ENCODE measurements at regions of chr11 and their contacts with region 1.

Region 1: DNA sequence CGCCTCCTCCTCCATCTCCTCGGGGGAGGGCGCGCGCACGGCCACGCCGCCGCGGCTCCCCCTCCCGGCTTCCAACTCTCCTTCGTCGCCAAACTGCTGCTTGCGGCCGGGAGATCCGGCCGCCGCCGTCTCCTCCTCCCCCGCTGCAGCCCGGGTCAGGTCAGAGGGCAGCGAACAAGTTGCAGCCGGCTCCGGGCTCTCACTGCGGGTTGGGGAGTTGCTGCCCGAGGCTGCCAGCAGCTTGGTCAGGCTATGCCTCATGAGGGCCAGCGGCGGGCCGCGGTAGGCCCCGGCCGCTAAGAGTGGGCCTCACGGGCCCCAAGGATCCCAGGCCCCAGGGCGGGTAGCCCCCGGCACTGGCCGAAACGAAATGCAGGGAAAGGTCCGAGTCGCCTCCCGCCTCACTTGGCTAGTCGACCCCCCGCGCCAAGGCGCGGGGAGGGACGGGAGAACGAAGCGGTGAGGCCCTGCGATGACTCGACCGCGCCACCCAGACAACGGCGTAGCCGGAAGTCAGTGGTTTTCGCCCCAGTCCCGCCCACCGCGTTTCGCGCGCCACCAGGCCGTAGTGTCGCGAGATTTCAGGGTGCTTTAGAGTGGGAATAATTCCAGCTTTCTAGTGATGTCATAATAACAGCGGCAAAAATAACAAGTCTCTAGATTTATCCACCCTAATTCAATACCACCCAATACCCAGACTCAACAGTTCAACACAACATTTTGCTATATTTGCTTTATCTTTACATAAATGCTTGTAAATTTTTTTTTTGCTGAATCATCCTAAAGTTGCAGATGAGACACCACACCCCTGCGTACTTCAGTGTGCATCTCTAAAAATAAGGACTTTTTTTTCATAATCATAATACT is at the start of gene CREBZF:
- DNase-seq: peak; percentile 95
- ATAC-seq: peak; percentile 84
- H3K4me3 ChIP-seq: peak within 1 kb of the TSS; percentile 78 to 95 (median 89)
- H3K4me3 Mint-ChIP-seq: peak within 1 kb of the TSS; percentile 94
- H3K27ac ChIP-seq: peak within 1 kb of the TSS; percentile 96 to 97
- H3K27ac Mint-ChIP-seq: peak within 1 kb of the TSS; percentile 95
- H3K4me1 ChIP-seq: peaks cover 16 to 21% of the 10 kb centered on the region in 2 donors
- H3K4me1 Mint-ChIP-seq: peaks cover 45% of the 10 kb centered on the region
- H3K27me3 ChIP-seq: no peaks in the 10 kb centered on the region
- H3K27me3 Mint-ChIP-seq: no peaks in the 10 kb centered on the region
- CTCF ChIP-seq: no peak
- total RNA-seq, gene CREBZF: 109 and 110 TPM in 2 replicates

Region 2: GRCh38 chr11:85316967-85317366 is 347.9 kb before region 1 on chr11:
- CTCF ChIA-PET with region 1: no interaction called
- POLR2A ChIA-PET with region 1: no interaction called
- intact Hi-C with region 1: loop called (anchors 10 kb)
- DNase-seq: peak; percentile 84
- ATAC-seq: peak; percentile 90
- H3K4me3 ChIP-seq: peak overlapping the region in 2 of 5 experiments; percentile 5 to 29
- H3K4me3 Mint-ChIP-seq: peak overlapping the region; percentile 52
- H3K27ac ChIP-seq: peak overlapping the region; percentile 69 to 74
- H3K27ac Mint-ChIP-seq: peak overlapping the region; percentile 80
- H3K4me1 ChIP-seq: peaks cover 39 to 41% of the 10 kb centered on the region in 2 donors
- H3K4me1 Mint-ChIP-seq: peaks cover 54% of the 10 kb centered on the region
- H3K27me3 ChIP-seq: no peaks in the 10 kb centered on the region
- H3K27me3 Mint-ChIP-seq: no peaks in the 10 kb centered on the region
- CTCF ChIP-seq: no peak

Region 3: DNA sequence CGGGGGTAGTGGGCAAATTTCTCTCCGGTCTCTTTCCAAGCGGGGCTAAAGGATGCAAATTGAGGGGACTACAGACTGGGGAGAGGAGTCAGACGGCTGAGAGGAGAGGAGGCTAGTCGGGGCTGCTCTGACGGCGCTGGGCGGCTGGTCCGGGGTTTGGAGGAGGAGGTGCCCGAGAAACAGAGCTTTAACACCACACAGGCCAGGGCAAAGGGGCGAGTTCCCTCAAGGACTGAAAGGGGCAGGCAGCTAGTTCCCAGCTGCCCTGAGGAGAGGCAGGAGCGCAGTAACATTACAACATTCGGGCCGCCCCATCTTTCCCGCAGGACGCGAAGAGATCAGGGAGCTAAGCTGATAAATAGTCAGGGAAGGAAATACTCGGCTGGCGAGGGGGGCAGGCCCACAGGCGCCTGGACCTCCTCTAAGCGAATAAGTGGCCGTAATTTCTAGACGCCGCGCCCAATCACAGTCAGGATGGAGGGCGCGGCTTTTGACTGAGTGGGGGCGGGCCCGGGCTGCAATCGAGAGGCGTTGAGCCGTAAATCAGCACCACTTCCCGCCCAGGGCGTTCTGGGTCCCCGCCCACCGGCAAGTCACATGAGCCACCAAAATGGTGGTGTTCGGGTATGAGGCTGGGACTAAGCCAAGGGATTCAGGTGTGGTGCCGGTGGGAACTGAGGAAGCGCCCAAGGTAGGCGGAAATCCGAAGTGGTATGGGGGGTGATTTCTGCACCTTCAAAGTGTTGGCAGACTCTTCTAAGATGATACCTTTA is 36.7 kb before region 1 on chr11 and contains the start of gene TMEM126B:
- CTCF ChIA-PET with region 1: interaction called, 15 read pairs
- POLR2A ChIA-PET with region 1: interaction called, 16 read pairs
- intact Hi-C with region 1: loop called (anchors 1 kb)
- DNase-seq: peak; percentile 95
- ATAC-seq: peak; percentile 98
- H3K4me3 ChIP-seq: peak within 1 kb of the TSS; percentile 75 to 99 (median 85)
- H3K4me3 Mint-ChIP-seq: peak within 1 kb of the TSS; percentile 99
- H3K27ac ChIP-seq: peak within 1 kb of the TSS; percentile 65 to 87
- H3K27ac Mint-ChIP-seq: peak within 1 kb of the TSS; percentile 96
- H3K4me1 ChIP-seq: peaks cover 14 to 19% of the 10 kb centered on the region in 2 donors
- H3K4me1 Mint-ChIP-seq: peaks cover 28% of the 10 kb centered on the region
- H3K27me3 ChIP-seq: no peaks in the 10 kb centered on the region
- H3K27me3 Mint-ChIP-seq: peaks cover 5% of the 10 kb centered on the region
- CTCF ChIP-seq: no peak
- total RNA-seq, gene TMEM126B: 37.2 and 38.5 TPM in 2 replicates

Region 4: DNA sequence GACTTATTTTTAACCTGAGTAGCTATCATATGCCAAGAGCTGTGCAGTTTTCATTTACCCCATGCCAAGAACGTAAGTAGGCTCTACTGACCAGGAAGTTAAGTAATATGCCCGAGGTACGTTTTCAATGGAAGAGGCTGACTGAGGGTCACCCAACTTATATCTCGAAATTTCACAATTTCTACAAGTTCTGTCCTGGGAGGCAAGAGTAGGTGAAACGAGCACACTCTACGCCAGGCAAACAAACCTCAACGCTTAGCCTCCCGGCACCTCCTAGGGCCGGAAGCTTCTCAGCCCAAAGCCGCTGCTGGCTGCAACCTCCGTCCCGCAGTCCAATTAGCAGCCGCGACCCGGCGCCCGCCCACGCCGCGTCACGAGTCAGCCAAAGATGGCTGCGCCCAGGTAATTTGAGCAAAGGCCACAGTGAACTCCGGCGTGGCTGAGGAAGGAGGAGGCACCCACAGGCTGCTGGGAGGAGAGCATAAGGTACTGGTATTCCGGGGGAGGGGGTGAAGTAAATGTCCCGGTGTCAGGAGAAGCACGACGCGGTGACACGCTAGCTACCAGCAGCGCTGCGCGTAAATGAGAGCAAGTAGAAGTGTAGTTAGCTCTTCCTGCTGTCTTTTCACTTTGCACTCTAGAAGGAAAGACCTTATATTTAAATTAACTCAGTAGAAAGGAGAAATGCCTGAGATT is 17.1 kb before region 1 on chr11 and contains the start of gene TMEM126A:
- CTCF ChIA-PET with region 1: interaction called, 7 read pairs
- POLR2A ChIA-PET with region 1: interaction called, 8 read pairs
- intact Hi-C with region 1: loop called (anchors 1 kb)
- DNase-seq: peak; percentile 91
- ATAC-seq: peak; percentile 99
- H3K4me3 ChIP-seq: peak within 1 kb of the TSS; percentile 79 to 87 (median 85)
- H3K4me3 Mint-ChIP-seq: peak within 1 kb of the TSS; percentile 89
- H3K27ac ChIP-seq: peak within 1 kb of the TSS; percentile 71 to 91
- H3K27ac Mint-ChIP-seq: peak within 1 kb of the TSS; percentile 93
- H3K4me1 ChIP-seq: peaks cover 12 to 13% of the 10 kb centered on the region in 2 donors
- H3K4me1 Mint-ChIP-seq: peaks cover 18% of the 10 kb centered on the region
- H3K27me3 ChIP-seq: peaks cover 0 to 12% (median 4%) of the 10 kb centered on the region in 4 experiments
- H3K27me3 Mint-ChIP-seq: peaks cover 19% of the 10 kb centered on the region
- CTCF ChIP-seq: no peak
- total RNA-seq, gene TMEM126A: 13.0 and 15.8 TPM in 2 replicates

Region 5: DNA sequence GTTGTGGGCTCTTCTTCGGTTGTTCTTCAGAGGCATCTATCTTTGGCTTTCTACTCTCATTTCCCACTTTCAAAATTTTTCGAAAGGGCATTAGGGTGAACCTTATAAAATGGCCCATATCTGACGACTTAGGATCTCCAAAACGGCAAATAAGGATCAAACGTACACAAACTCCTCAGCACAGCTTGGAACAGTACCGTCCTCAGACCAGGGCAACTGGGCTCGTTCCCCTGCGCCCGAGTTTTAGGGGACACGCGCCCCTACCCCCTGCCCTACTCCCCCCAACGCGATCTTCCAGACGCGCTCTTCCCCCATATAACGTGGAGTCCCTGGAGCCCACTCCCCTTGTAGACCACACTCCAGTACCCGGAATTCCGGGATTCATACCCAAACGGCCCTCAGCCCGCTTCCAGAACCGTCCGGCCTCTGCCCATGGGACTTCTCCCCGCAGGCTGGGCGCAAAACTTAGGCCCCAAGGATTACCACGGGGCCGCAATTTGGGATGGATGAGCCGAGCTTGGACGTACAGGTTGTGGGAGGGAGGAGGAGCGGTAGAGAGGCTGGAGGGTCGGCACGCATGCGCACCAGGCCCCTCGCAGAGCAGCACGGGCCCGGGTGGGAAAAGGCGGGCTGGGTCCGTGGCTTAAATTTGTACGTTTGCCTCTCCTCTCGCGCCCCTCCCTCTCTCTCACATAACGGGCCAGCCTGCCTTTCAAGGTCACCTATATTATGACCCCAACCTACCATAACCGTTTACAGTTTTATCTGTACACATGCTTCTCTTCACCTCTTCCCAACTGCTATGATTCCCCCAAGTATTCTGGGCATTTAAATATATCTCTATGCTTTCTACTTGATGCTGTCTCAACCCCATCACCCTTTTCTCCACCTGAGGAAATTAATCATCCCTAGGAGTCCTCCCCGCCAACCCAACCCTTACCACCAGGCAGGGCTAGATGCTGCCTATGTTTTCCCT is 17.8 kb after region 1 on chr11:
- CTCF ChIA-PET with region 1: interaction called, 3 read pairs
- POLR2A ChIA-PET with region 1: no interaction called
- intact Hi-C with region 1: loop called (anchors 1 kb)
- DNase-seq: peak; percentile 70
- ATAC-seq: peak; percentile 95
- H3K4me3 ChIP-seq: peak overlapping the region; percentile 62 to 96 (median 77)
- H3K4me3 Mint-ChIP-seq: peak overlapping the region; percentile 87
- H3K27ac ChIP-seq: peak overlapping the region; percentile 31 to 72
- H3K27ac Mint-ChIP-seq: peak overlapping the region; percentile 85
- H3K4me1 ChIP-seq: peaks cover 0 to 4% of the 10 kb centered on the region in 2 donors
- H3K4me1 Mint-ChIP-seq: peaks cover 17% of the 10 kb centered on the region
- H3K27me3 ChIP-seq: peaks cover 0 to 9% (median 0%) of the 10 kb centered on the region in 4 experiments
- H3K27me3 Mint-ChIP-seq: peaks cover 9% of the 10 kb centered on the region
- CTCF ChIP-seq: no peak

Region 6: GRCh38 chr11:86021377-86021776 is 356.5 kb after region 1 on chr11:
- CTCF ChIA-PET with region 1: no interaction called
- POLR2A ChIA-PET with region 1: no interaction called
- intact Hi-C with region 1: no loop called
- DNase-seq: no peak
- ATAC-seq: no peak
- H3K4me3 ChIP-seq: no peak overlapping the region
- H3K4me3 Mint-ChIP-seq: no peak overlapping the region
- H3K27ac ChIP-seq: peak overlapping the region in 1 of 2 donors; percentile 37
- H3K27ac Mint-ChIP-seq: no peak overlapping the region
- H3K4me1 ChIP-seq: no peaks in the 10 kb centered on the region
- H3K4me1 Mint-ChIP-seq: peaks cover 17% of the 10 kb centered on the region
- H3K27me3 ChIP-seq: no peaks in the 10 kb centered on the region
- H3K27me3 Mint-ChIP-seq: no peaks in the 10 kb centered on the region
- CTCF ChIP-seq: no peak

Region 7: GRCh38 chr11:86302100-86302793 is 637.4 kb after region 1 on chr11 and contains the start of gene HIKESHI:
- CTCF ChIA-PET with region 1: no interaction called
- POLR2A ChIA-PET with region 1: no interaction called
- intact Hi-C with region 1: loop called (anchors 1 kb)
- DNase-seq: peak; percentile 90
- ATAC-seq: peak; percentile 99
- H3K4me3 ChIP-seq: peak within 1 kb of the TSS; percentile 70 to 96 (median 92)
- H3K4me3 Mint-ChIP-seq: peak within 1 kb of the TSS; percentile 98
- H3K27ac ChIP-seq: peak within 1 kb of the TSS; percentile 70 to 95
- H3K27ac Mint-ChIP-seq: peak within 1 kb of the TSS; percentile 95
- H3K4me1 ChIP-seq: peaks cover 10 to 13% of the 10 kb centered on the region in 2 donors
- H3K4me1 Mint-ChIP-seq: peaks cover 20% of the 10 kb centered on the region
- H3K27me3 ChIP-seq: no peaks in the 10 kb centered on the region
- H3K27me3 Mint-ChIP-seq: no peaks in the 10 kb centered on the region
- CTCF ChIP-seq: no peak
- total RNA-seq, gene HIKESHI: 23.3 and 24.4 TPM in 2 replicates

Region 8: DNA sequence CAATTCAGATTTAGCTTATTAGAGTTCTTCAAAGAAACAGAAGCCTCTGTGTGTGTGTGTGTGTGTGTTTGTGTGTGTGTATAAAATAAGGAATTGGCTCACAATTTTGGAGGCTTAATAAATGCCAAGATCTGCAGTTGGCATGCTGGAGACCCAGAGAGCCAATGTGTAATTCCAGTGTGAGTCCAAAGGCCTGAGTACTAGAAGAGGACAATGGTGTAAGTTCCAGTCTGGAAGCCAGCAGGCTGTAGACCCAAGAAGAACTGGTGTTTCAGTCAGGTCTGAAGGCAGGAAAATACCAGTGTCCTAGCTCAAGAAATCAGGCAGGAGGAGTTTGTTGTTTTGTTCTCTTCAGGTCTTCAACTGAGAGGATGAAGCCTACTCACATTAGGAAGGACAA is 1392.9 kb after region 1 on chr11:
- CTCF ChIA-PET with region 1: no interaction called
- POLR2A ChIA-PET with region 1: no interaction called
- intact Hi-C with region 1: no loop called
- DNase-seq: no peak
- ATAC-seq: no peak
- H3K4me3 ChIP-seq: no peak overlapping the region
- H3K4me3 Mint-ChIP-seq: no peak overlapping the region
- H3K27ac ChIP-seq: no peak overlapping the region
- H3K27ac Mint-ChIP-seq: no peak overlapping the region
- H3K4me1 ChIP-seq: no peaks in the 10 kb centered on the region
- H3K4me1 Mint-ChIP-seq: peaks cover 2% of the 10 kb centered on the region
- H3K27me3 ChIP-seq: no peaks in the 10 kb centered on the region
- H3K27me3 Mint-ChIP-seq: no peaks in the 10 kb centered on the region
- CTCF ChIP-seq: no peak

Measured in B cell (primary cell).